H1 (cell line): ENCODE measurements at regions of chr1 and their contacts with region 1.

Region 1: DNA sequence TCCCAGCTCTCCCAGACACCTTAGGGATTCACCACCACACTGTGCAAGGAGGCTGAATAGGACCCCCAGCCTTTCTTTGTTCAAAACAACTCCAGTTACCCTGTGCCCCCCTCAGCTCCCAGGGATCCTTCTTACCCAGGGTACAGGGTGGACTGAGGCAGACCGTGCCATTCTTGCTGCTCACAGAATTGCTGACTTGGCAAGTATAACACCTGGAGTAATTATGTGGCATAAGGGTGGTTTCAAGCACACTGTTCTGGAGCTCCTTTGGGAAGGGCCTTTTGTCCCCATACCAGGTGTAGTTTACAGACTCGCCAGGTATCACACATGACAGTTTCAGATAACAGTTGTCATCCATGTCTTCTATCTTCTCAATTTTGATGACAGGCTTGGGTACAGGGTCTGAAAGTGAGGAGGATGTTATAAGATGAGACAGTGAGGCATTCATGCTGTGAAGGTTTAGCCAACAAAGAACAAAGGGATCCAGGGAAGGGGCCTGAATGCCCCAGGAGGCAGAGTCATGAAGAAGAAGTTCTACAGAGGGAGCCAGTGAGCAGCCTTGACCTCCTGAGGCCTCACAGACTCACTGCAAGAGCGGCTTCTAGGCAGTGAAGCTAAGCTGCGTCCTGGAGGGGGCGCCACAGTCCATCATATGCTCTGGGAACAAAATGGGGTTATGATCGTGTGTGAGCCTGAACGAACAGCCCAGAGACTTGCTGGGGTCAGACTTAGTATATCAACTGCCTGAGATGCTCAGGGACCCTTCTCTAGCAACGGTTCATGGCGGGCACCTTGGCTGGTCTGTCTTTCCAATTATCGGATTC is 30.3 kb downstream of the CD48 start:
- DNase-seq: peak; percentile 90 to 92
- H3K4me3 ChIP-seq: no peak overlapping the region
- H3K27ac ChIP-seq: no peak overlapping the region
- H3K4me1 ChIP-seq: peaks cover 0 to 4% (median 0%) of the 10 kb centered on the region in 4 experiments; a peak in 1 of 7 replicates
- H3K27me3 ChIP-seq: no peaks in the 10 kb centered on the region
- CTCF ChIP-seq: peak; percentile 98 to 100 (median 99)
- EP300 ChIP-seq: no peak
- POLR2A ChIP-seq: no peak
- RAD21 ChIP-seq: peak; percentile 98 to 99

Region 2: GRCh38 chr1:160451119-160451858 is 230.0 kb before region 1 on chr1:
- CTCF ChIA-PET with region 1: no interaction called
- POLR2A ChIA-PET with region 1: no interaction called
- DNase-seq: no peak
- H3K4me3 ChIP-seq: no peak overlapping the region
- H3K27ac ChIP-seq: no peak overlapping the region
- H3K4me1 ChIP-seq: no peaks in the 10 kb centered on the region
- H3K27me3 ChIP-seq: peaks cover 0 to 1% (median 0%) of the 10 kb centered on the region in 4 experiments; a peak in 1 of 7 replicates
- CTCF ChIP-seq: no peak
- EP300 ChIP-seq: no peak
- POLR2A ChIP-seq: no peak
- RAD21 ChIP-seq: no peak

Region 3: GRCh38 chr1:160618763-160619274 is 62.5 kb before region 1 on chr1:
- CTCF ChIA-PET with region 1: interaction called, 27 read pairs
- POLR2A ChIA-PET with region 1: no interaction called
- DNase-seq: no peak
- H3K4me3 ChIP-seq: no peak overlapping the region
- H3K27ac ChIP-seq: no peak overlapping the region
- H3K4me1 ChIP-seq: no peaks in the 10 kb centered on the region; a peak in 1 of 7 replicates
- H3K27me3 ChIP-seq: no peaks in the 10 kb centered on the region
- CTCF ChIP-seq: peak in 2 of 3 experiments; percentile 39 to 69; a peak in 3 of 4 replicates
- EP300 ChIP-seq: no peak
- POLR2A ChIP-seq: no peak
- RAD21 ChIP-seq: peak in 1 of 2 experiments; percentile 40; a peak in 1 of 4 replicates

Region 4: DNA sequence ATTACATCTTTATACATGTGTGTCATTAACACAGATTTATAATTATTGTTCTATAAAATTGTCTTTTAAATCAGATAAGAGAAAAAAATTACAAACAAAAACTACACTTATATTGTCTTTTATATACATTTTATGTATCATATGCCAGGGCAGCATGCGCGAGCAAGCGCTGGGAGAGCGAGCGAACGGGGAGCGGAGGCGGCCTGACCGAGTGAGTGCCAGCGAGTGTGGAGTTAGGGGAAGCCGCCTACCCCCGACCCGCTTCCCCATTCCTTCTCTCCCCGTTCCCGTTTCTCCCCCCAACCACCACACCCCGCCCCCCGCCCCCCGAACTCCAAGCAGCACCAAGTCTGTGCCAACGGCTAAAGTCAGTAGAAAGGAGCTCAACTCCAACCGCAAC is 11.5 kb before region 1 on chr1:
- CTCF ChIA-PET with region 1: interaction called, 32 read pairs
- POLR2A ChIA-PET with region 1: interaction called, 5 read pairs
- DNase-seq: no peak
- H3K4me3 ChIP-seq: no peak overlapping the region
- H3K27ac ChIP-seq: no peak overlapping the region
- H3K4me1 ChIP-seq: peaks cover 16 to 23% (median 18%) of the 10 kb centered on the region in 4 experiments
- H3K27me3 ChIP-seq: no peaks in the 10 kb centered on the region
- CTCF ChIP-seq: no peak
- EP300 ChIP-seq: no peak
- POLR2A ChIP-seq: no peak
- RAD21 ChIP-seq: no peak

Region 5: GRCh38 chr1:160726498-160727315 is 45.4 kb after region 1 on chr1:
- CTCF ChIA-PET with region 1: interaction called, 32 read pairs
- POLR2A ChIA-PET with region 1: no interaction called
- DNase-seq: peak; percentile 62 to 68
- H3K4me3 ChIP-seq: no peak overlapping the region
- H3K27ac ChIP-seq: peak overlapping the region; percentile 12; the same call in 1 of the 2 replicates
- H3K4me1 ChIP-seq: peaks cover 0 to 5% (median 2%) of the 10 kb centered on the region in 4 experiments; a peak in 3 of 7 replicates
- H3K27me3 ChIP-seq: no peaks in the 10 kb centered on the region
- CTCF ChIP-seq: peak; percentile 59 to 92 (median 81)
- EP300 ChIP-seq: no peak
- POLR2A ChIP-seq: no peak
- RAD21 ChIP-seq: peak; percentile 95 to 96

Region 6: DNA sequence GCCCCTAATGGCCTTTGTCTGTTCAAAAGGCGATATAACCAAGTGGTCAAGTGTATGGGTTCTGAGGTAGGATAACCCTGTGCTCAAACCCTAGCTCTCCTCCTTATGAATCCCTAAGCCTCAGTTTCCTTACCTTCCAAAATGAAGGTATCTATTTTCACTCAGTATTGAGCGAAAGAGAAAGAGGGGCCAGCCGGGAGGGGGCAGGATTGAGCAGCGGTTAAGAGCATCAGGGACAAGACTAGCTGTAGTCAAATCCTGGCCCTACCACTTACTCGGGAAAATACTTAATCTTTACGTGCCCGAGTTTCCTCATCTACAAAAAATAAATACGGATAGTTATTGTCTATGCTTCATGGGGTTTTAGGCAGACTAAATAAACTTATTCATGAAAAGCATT is 140.3 kb after region 1 on chr1:
- CTCF ChIA-PET with region 1: interaction called, 11 read pairs
- POLR2A ChIA-PET with region 1: no interaction called
- DNase-seq: peak in 1 of 2 experiments; percentile 76
- H3K4me3 ChIP-seq: no peak overlapping the region
- H3K27ac ChIP-seq: no peak overlapping the region
- H3K4me1 ChIP-seq: peaks cover 0 to 6% (median 2%) of the 10 kb centered on the region in 4 experiments; a peak in 2 of 7 replicates
- H3K27me3 ChIP-seq: no peaks in the 10 kb centered on the region
- CTCF ChIP-seq: peak; percentile 43 to 59 (median 46)
- EP300 ChIP-seq: no peak
- POLR2A ChIP-seq: no peak
- RAD21 ChIP-seq: peak in 1 of 2 experiments; percentile 55; a peak in 3 of 4 replicates

Region 7: GRCh38 chr1:160837558-160838205 is 156.4 kb after region 1 on chr1:
- CTCF ChIA-PET with region 1: interaction called, 14 read pairs
- POLR2A ChIA-PET with region 1: no interaction called
- DNase-seq: no peak
- H3K4me3 ChIP-seq: no peak overlapping the region
- H3K27ac ChIP-seq: no peak overlapping the region
- H3K4me1 ChIP-seq: peaks cover 0 to 3% (median 0%) of the 10 kb centered on the region in 4 experiments; a peak in 2 of 7 replicates
- H3K27me3 ChIP-seq: no peaks in the 10 kb centered on the region; a peak in 1 of 7 replicates
- CTCF ChIP-seq: no peak
- EP300 ChIP-seq: no peak
- POLR2A ChIP-seq: no peak
- RAD21 ChIP-seq: no peak